Activated naive CD4-positive, alpha-beta T cell treated with anti-CD3 and anti-CD28 coated beads for 36 hours (primary cell): ENCODE measurements at regions of chr15 and their contacts with region 1.

Region 1: DNA sequence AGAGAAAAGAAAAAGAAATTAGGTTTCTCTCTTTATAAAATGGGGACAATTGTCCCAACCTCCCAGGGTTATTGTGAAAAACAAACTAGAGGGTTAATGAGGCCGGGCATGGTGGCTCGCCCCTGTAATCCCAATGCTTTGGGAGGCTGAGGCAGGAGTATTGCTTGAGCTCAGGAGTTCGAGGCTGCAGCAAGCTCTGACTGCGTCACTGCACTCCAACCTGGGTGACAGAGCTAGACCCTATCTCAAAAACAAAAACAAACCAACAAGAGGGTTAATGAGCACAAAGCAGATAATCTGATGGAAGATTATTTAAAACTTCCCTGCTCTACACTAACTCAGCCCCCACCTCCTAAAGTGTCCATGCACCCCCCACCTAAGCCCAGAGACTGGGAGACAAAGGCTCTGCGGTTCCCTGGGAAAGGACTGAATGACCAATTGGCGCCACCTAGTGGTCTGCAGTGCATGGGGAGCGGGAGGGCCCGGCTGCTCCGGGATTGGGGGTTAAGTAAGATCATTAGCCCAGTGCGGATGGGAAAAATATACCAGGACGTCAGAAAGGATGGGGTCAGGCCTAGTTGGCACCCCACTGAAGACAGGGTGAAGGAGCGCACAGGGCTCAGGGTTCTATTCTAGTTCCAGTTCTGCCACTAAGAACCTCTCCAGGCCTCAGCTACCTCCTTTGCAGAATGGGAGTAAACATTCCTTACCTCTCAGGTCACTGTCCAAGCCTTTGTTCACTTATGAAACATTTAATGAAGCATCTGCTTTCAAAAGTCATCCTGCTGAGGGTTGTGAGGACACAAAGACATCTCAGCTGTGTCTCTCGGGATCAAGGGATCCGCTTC is 15.6 kb downstream of the PIF1 start:
- DNase-seq: peak; percentile 86
- H3K4me3 Mint-ChIP-seq: no peak overlapping the region
- H3K27ac Mint-ChIP-seq: no peak overlapping the region
- H3K4me1 Mint-ChIP-seq: peaks cover 3% of the 10 kb centered on the region
- H3K27me3 Mint-ChIP-seq: no peaks in the 10 kb centered on the region

Region 2: DNA sequence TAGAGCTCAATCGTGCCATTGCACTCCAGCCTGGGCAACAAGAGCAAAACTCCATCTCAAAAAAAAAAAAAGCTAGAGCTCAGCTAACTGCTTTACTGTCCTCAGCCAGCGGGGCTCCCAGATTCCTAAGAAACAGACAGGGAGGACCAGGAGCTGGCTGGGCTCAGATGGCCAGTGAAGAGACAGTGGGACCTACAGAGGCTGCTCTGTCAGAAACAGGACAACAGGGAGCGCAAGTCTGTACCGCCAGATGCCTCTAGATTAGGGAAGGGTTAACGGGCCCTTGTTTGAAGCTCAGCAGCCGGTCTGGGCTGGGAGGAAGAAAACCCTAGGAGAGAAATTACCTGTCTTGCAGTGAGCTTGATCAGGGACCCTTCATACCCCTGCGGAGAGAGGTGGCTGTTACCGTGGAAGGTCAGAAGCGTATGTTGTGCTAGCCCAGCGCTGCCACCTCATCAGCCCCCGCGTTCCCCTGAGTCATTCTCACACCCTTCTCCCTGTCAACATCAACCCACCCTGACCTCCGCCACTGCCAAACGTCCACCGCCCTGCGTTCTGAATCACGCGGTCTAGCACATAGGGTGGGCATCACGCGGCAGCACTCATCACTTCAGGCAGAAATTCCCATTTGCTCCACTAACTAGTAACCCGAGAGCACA is 59.7 kb before region 1 on chr15:
- CTCF ChIA-PET with region 1: interaction called, 11 read pairs
- intact Hi-C with region 1: loop called (anchors 5 kb)
- DNase-seq: no peak
- H3K4me3 Mint-ChIP-seq: no peak overlapping the region
- H3K27ac Mint-ChIP-seq: no peak overlapping the region
- H3K4me1 Mint-ChIP-seq: no peaks in the 10 kb centered on the region
- H3K27me3 Mint-ChIP-seq: peaks cover 2% of the 10 kb centered on the region

Region 3: DNA sequence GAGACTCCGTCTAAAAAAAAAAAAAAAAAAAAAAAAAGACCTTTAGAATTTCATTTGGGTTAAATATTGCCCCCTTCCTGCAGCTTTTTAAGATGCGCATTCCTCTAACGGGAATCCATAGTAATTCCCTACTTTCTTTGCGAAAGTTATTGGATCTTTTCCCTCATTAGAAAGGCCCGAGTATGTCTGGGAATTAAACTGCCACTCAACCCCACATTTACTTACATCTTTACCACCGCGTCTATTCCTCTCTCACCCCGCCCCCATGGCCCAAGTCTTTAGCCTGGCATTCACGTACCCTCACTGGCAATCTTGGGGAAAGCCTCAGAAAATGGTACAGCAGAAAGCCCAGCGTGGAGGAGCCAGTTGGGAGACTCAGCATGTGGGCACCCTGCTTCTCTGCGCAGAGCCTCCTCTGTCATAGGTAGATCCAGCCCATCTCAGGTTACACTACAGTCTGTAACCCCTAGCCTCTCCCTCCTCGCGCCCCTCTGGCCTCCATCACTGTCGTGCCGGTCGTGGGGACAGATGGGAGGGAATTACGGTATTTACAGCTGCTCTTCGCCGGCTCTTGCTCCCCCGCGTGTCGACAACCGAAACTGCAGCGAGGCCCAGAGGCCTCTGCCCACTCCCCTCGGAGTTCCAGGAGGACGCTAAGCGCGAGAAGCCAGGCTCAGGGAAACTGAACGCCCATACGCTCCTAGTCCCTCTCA is 95.4 kb after region 1 on chr15:
- CTCF ChIA-PET with region 1: interaction called, 14 read pairs
- intact Hi-C with region 1: no loop called
- DNase-seq: peak; percentile 89
- H3K4me3 Mint-ChIP-seq: peak overlapping the region; percentile 64
- H3K27ac Mint-ChIP-seq: peak overlapping the region; percentile 51
- H3K4me1 Mint-ChIP-seq: peaks cover 35% of the 10 kb centered on the region
- H3K27me3 Mint-ChIP-seq: no peaks in the 10 kb centered on the region